ENCODE measurements at regions of chr4 and their contacts with region 1.

Region 1: GRCh38 chr4:37826295-37827029 is at the start of gene PGM2:
- DNase-seq: peak; percentile 85 to 88
- H3K4me3 ChIP-seq: peak within 1 kb of the TSS; percentile 83
- H3K4me3 Mint-ChIP-seq: peak within 1 kb of the TSS; percentile 87
- H3K27ac Mint-ChIP-seq: peak within 1 kb of the TSS; percentile 79
- H3K4me1 ChIP-seq: peaks cover 5% of the 10 kb centered on the region; the same call in 1 of the 2 replicates
- H3K4me1 Mint-ChIP-seq: peaks cover 13% of the 10 kb centered on the region
- H3K27me3 ChIP-seq: no peaks in the 10 kb centered on the region
- H3K27me3 Mint-ChIP-seq: no peaks in the 10 kb centered on the region
- CTCF ChIP-seq: no peak
- total RNA-seq, gene PGM2: 29.7 and 33.4 TPM in 2 replicates

Region 2: GRCh38 chr4:37802068-37802666 is 24.3 kb before region 1 on chr4:
- CTCF ChIA-PET with region 1: interaction called, 12 read pairs
- POLR2A ChIA-PET with region 1: no interaction called
- intact Hi-C with region 1: loop called (anchors 1 kb)
- DNase-seq: peak; percentile 73 to 77
- H3K4me3 ChIP-seq: no peak overlapping the region
- H3K4me3 Mint-ChIP-seq: no peak overlapping the region
- H3K27ac Mint-ChIP-seq: no peak overlapping the region
- H3K4me1 ChIP-seq: no peaks in the 10 kb centered on the region
- H3K4me1 Mint-ChIP-seq: peaks cover 18% of the 10 kb centered on the region
- H3K27me3 ChIP-seq: no peaks in the 10 kb centered on the region
- H3K27me3 Mint-ChIP-seq: no peaks in the 10 kb centered on the region
- CTCF ChIP-seq: peak; percentile 59 to 80

Region 3: GRCh38 chr4:37812710-37813109 is 13.8 kb before region 1 on chr4:
- CTCF ChIA-PET with region 1: no interaction called
- POLR2A ChIA-PET with region 1: no interaction called
- intact Hi-C with region 1: loop called (anchors 2 kb)
- DNase-seq: peak; percentile 22 to 38
- H3K4me3 ChIP-seq: no peak overlapping the region
- H3K4me3 Mint-ChIP-seq: no peak overlapping the region
- H3K27ac Mint-ChIP-seq: peak overlapping the region; percentile 52
- H3K4me1 ChIP-seq: peaks cover 19% of the 10 kb centered on the region
- H3K4me1 Mint-ChIP-seq: peaks cover 15% of the 10 kb centered on the region
- H3K27me3 ChIP-seq: no peaks in the 10 kb centered on the region
- H3K27me3 Mint-ChIP-seq: no peaks in the 10 kb centered on the region
- CTCF ChIP-seq: no peak

Region 4: GRCh38 chr4:37977471-37978247 is 151.2 kb after region 1 on chr4:
- CTCF ChIA-PET with region 1: no interaction called
- POLR2A ChIA-PET with region 1: no interaction called
- intact Hi-C with region 1: loop called (anchors 5 kb)
- DNase-seq: peak; percentile 51 to 65
- H3K4me3 ChIP-seq: peak overlapping the region; percentile 54
- H3K4me3 Mint-ChIP-seq: peak overlapping the region; percentile 71
- H3K27ac Mint-ChIP-seq: no peak overlapping the region
- H3K4me1 ChIP-seq: peaks cover 15% of the 10 kb centered on the region; the same call in 1 of the 2 replicates
- H3K4me1 Mint-ChIP-seq: peaks cover 12% of the 10 kb centered on the region
- H3K27me3 ChIP-seq: no peaks in the 10 kb centered on the region
- H3K27me3 Mint-ChIP-seq: no peaks in the 10 kb centered on the region
- CTCF ChIP-seq: peak; percentile 23 to 64

Measured in Caco-2 (cell line).